Right ventricle myocardium superior (tissue), 1 donor: ENCODE measurements at regions of chr9 and their contacts with region 1.

Region 1: DNA sequence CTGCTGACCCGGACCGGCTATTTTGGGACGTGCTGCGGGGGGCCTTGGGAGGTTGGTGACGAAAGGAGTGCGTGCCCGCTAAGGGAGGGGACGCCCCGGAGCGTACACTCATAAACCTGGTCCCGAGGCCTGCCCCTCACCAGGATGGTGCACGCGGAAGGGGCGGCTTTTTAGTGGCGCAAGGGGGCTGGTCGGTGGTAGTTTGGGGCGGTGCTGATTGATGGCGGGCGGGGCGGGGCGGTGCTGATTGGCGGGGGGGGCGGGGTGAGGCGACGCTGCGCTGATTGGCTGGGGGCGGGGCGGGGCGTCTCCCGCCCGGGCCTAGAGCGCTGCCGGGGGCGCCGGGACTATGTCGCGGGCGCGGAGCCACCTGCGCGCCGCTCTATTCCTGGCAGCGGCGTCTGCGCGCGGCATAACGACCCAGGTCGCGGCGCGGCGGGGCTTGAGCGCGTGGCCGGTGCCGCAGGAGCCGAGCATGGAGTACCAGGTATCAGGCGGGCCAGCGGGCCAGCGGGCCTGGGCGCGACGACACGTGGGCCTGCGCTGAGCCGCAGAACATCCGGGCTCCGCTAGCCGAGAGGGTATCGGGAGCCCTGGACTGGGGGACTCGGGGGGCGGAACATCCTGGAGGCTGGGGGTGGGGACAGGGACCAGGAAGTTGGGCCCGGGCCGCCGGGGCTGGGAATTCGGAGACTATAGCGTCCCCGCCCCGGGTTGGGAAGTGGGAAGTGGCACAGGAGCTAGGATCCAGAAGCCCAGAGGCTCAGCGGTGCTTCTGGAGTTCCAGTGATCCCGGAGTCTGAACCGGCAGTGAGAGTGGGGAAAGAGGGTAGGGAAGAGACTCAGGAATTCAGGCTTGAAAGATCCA is at the start of gene FPGS:
- DNase-seq: peak; percentile 93
- ATAC-seq: peak; percentile 93
- total RNA-seq, gene FPGS: 31.5 TPM

Region 2: DNA sequence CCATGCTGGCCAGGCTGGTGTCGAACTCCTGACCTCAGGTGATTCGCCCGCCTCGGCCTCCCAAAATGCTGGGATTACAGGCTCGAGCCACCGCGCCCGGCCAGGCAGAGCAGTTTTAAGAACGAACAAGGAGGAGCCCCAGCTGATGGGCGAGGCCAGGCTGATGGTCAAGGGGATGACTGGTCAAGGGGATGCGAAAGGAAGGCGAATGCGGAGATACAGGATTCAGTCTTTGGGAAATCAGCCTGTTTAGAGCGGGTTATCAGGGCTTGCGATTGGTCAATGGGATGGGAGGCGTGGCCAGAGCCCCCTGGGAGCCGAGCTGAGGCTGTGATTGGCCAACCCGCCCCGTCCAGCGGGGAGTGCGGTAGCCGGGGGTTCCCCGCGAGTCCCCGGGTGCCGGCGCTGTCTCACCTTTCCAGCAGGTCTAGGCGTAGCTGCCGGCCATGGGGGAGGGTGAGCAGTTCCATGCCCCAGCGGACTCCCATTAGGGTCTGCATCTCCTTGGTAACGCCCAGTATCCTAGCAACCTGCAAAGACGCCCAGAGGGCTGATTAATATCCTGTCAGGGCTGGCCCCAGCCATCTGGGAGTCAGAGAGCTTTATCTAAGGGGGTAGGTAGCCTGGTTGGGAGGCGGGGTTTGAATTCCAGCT is 60.2 kb before region 1 on chr9:
- intact Hi-C with region 1: no loop called
- DNase-seq: no peak
- ATAC-seq: peak; percentile 36

Region 3: GRCh38 chr9:127869310-127870152 is 66.7 kb after region 1 on chr9:
- intact Hi-C with region 1: loop called (anchors 5 kb)
- DNase-seq: peak; percentile 93
- ATAC-seq: peak; percentile 76

Region 4: DNA sequence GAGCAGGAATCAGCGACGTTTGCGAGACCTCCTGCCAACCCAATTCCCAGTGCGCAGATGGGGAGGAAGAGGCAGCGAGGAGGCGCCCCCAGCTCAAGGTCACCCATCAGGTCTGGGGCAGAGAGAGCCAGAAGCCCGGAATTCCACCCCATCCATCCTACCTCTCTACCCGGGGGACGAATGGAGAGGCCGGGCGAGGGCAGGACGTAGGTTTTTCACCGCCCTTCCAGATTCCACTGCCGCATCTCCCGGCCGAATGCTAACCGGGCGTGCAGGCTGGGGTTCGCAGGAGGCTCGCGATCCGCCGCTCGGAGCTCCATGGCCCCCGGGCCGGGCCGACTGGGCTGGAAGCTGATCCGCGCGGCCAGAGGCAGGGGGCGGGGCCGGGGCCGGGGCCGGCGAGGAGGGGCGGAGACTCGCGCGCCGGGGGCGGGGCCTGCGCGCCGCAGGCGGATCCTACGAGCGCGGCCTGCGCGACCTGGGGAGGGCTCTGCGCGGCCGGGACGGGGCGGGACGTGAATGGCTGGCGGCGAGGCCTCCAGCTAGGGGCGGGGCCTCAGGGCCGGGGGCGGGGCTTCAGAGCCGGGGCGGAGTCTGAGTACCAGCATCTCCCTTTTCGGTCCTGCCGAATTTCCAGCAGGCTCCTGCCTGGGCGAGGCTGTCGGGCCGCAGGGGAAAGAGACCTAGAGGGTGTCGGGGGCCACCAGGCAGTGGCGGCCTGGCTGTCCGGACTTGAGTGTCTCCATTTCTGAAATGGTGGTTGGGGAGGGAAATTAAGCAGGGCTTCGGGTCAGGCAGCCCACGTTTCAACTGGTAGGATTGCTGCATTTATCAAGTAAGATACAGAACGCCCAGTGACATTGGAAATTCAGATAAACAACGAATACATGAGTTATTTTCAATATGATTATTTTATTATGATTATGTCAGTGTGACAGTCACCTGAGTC is 114.1 kb after region 1 on chr9 and contains the start of gene ST6GALNAC4:
- intact Hi-C with region 1: loop called (anchors 5 kb)
- DNase-seq: peak; percentile 97
- ATAC-seq: peak; percentile 96
- total RNA-seq, gene ST6GALNAC4: 18.1 TPM